ENCODE measurements at regions of chr7 and their contacts with region 1.

Region 1: DNA sequence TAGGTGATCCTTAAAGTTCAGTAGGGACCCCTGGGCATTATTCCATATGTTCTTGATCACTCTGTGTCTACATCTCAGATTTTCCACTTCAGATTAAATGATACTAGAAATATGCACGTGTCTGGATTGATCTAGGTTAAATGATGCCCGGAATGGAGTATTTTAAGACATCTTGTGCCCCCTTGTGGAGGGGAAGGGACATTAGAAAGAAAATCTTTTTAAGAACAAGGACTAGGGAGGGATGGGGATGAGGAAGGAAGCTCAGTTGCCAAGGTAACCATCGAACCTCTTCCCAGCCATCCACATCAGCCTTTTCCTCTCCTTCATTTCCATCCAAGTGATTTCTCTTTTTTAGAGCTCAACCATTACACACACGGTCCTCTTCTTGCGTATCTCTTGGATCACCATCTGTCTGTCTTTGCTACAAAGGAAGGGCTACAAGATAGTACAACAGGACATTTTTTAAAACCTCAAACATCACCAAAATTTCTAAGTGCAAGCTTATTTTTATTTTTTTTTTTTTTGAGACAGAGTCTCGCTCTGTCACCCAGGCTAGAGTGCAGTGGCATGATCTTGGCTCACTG is 40.5 kb downstream of the PRSS2 start:
- DNase-seq: peak; percentile 59
- ATAC-seq: no peak
- H3K4me3 Mint-ChIP-seq: peak overlapping the region; percentile 100
- H3K27ac Mint-ChIP-seq: peak overlapping the region; percentile 97
- H3K4me1 Mint-ChIP-seq: peaks cover 68% of the 10 kb centered on the region
- H3K27me3 Mint-ChIP-seq: no peaks in the 10 kb centered on the region
- CTCF ChIP-seq: peak; percentile 83

Region 2: DNA sequence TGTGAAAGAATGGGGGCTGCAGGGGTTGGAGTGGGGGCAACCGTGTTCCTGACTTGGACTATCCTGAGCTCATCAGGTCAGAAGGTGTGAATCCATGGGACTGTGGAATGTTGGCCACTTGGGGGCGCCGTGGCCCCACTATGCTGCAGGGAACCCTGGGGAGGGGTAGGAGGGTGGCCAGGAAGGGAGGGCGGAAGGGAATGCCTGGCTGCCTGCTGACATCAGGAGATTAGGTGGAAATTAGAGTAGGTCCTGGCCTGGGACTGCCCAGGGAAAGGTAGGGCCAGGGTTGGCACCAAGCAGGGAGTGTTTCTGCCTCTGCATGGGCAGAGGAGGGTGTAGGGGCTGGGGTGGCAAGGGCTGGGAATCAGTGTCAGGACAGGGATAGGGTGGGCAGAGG is 487.5 kb before region 1 on chr7:
- CTCF ChIA-PET with region 1: interaction called, 4 read pairs
- POLR2A ChIA-PET with region 1: interaction called, 12 read pairs
- intact Hi-C with region 1: loop called (anchors 5 kb)
- DNase-seq: peak; percentile 66
- ATAC-seq: peak; percentile 61
- H3K4me3 Mint-ChIP-seq: peak overlapping the region; percentile 40
- H3K27ac Mint-ChIP-seq: peak overlapping the region; percentile 40
- H3K4me1 Mint-ChIP-seq: peaks cover 20% of the 10 kb centered on the region
- H3K27me3 Mint-ChIP-seq: no peaks in the 10 kb centered on the region
- CTCF ChIP-seq: peak; percentile 75

Region 3: DNA sequence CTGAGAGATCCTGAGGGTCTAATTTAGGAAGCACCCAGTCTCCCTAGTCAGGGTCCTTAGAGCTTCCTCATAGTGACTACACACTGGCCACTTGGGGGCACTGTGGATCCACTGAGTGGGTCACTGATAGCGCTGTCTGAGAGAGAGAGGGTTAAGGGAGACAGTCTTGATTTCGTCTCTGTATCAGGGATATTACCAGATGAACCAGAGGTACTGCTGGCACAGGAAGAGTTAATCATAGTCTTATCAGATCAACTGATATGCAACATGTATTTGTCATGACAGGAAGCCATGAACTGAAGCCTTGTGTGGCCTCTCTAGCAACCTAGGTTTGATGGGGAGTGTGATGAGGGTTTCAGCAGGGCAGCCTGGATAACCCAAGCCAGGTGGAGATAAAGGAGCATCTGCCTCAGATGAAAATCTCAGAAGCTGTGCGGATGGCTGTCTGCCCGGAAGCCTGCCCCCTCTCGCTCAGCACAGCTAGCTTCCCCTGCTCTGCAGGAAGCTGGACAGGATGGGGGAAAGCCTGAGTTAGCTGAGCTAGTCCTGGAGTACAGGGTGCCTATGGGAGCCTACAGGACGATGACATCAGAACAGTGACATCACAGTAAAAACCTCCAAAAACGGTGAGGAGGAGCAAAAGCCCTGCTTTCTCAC is 276.0 kb before region 1 on chr7:
- CTCF ChIA-PET with region 1: interaction called, 30 read pairs
- POLR2A ChIA-PET with region 1: interaction called, 15 read pairs
- intact Hi-C with region 1: loop called (anchors 5 kb)
- DNase-seq: peak; percentile 85
- ATAC-seq: peak; percentile 93
- H3K4me3 Mint-ChIP-seq: peak overlapping the region; percentile 60
- H3K27ac Mint-ChIP-seq: peak overlapping the region; percentile 84
- H3K4me1 Mint-ChIP-seq: peaks cover 29% of the 10 kb centered on the region
- H3K27me3 Mint-ChIP-seq: no peaks in the 10 kb centered on the region
- CTCF ChIP-seq: peak; percentile 58

Region 4: GRCh38 chr7:142669074-142669654 is 142.1 kb before region 1 on chr7:
- CTCF ChIA-PET with region 1: interaction called, 25 read pairs
- POLR2A ChIA-PET with region 1: no interaction called
- intact Hi-C with region 1: no loop called
- DNase-seq: no peak
- ATAC-seq: peak; percentile 49
- H3K4me3 Mint-ChIP-seq: no peak overlapping the region
- H3K27ac Mint-ChIP-seq: no peak overlapping the region
- H3K4me1 Mint-ChIP-seq: peaks cover 22% of the 10 kb centered on the region
- H3K27me3 Mint-ChIP-seq: no peaks in the 10 kb centered on the region
- CTCF ChIP-seq: peak; percentile 43

Region 5: GRCh38 chr7:142796608-142797385 is 14.4 kb before region 1 on chr7:
- CTCF ChIA-PET with region 1: interaction called, 145 read pairs
- POLR2A ChIA-PET with region 1: interaction called, 1,391 read pairs
- intact Hi-C with region 1: loop called (anchors 1 kb)
- DNase-seq: peak; percentile 23
- ATAC-seq: no peak
- H3K4me3 Mint-ChIP-seq: peak overlapping the region; percentile 100
- H3K27ac Mint-ChIP-seq: peak overlapping the region; percentile 97
- H3K4me1 Mint-ChIP-seq: peaks cover 52% of the 10 kb centered on the region
- H3K27me3 Mint-ChIP-seq: no peaks in the 10 kb centered on the region
- CTCF ChIP-seq: no peak

Region 6: DNA sequence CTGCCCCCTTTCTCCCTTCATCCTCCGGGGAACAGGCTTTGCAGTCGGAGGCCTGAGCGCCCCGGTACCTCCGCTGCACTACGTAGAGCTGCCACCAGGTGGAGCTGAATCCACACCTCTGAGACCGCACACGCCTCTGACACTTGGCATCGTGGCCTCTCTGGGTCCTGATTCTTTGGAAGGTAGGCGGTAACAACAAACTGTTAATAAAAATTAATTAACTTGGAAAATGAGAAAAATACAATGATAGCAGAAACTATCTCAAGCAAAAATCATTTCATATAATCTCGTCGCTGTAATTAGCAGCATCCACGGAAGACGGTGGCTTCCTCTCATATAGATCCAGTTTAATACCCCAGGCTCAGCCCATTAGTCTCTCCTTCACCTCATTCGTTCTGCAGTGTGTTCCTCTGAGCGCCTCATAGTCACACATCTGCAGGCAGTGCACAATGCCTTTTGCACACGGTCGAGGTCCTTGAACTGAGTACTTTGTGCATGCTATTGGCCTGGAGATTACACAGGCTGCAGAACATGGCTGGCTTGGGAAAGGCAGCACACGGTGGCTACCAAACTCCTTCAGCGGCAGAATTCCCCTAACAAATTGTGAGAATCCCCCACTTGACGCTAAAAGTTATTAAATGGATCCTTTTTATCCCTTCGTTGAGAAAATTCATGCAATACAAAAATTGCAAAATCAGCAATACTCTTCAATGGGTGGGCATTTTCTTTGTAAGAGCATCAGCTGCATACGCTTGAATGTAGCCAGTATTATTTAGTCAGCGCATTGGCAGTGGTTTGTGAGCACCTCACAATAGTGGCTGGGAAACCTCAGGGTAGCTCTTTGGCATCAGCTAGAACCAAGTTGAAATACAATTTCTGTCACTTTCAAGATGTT is 197.0 kb after region 1 on chr7:
- CTCF ChIA-PET with region 1: interaction called, 10 read pairs
- POLR2A ChIA-PET with region 1: no interaction called
- intact Hi-C with region 1: no loop called
- DNase-seq: peak; percentile 89
- ATAC-seq: peak; percentile 98
- H3K4me3 Mint-ChIP-seq: no peak overlapping the region
- H3K27ac Mint-ChIP-seq: no peak overlapping the region
- H3K4me1 Mint-ChIP-seq: peaks cover 5% of the 10 kb centered on the region
- H3K27me3 Mint-ChIP-seq: peaks cover 5% of the 10 kb centered on the region
- CTCF ChIP-seq: peak; percentile 92

Measured in activated CD8-positive, alpha-beta T cell treated with anti-CD3 and anti-CD28 coated beads for 36 hours (primary cell).